Caco-2 (cell line): ENCODE measurements at regions of chr1 and their contacts with region 1.

Region 1: DNA sequence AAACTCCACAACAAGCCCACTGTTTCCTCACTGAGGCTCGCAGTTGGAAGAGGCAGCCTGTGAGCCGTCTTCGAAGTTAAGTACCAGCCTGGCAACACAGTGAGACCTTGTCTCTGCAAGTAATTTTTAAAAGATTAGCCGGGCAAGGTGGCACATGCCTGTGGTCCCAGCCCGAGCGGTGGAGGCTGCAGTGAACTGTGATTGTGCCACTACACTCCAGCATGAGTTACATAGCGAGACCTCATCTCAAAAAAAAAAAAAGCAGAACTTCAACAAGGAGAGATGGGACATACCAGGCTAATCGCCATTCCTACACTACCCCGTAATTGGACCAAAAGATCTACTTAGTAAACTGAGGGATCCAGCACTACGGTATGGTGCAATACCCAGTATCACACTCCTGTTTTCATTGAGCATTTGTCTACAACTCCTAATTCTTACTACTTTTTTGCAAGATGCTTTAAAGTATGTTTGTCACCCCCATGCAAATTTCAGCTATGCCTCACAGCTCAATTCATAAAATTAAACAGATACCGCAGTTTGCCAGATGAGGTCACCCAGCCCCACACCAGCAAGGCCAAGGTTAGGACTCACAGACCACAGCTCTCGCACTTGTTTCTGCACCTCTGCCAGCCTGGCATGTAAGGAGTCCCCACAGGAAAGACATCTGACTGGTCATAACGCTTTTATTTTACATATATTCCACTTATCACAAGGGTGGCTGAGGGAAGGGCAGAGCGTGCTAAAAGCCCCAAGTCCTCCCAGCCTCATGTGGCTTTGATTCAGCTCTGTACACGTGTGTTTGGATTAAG is 21.0 kb downstream of the SDE2 start:
- DNase-seq: no peak
- H3K4me3 ChIP-seq: no peak overlapping the region
- H3K4me3 Mint-ChIP-seq: no peak overlapping the region
- H3K27ac Mint-ChIP-seq: no peak overlapping the region
- H3K4me1 ChIP-seq: no peaks in the 10 kb centered on the region
- H3K4me1 Mint-ChIP-seq: no peaks in the 10 kb centered on the region
- H3K27me3 ChIP-seq: no peaks in the 10 kb centered on the region
- H3K27me3 Mint-ChIP-seq: no peaks in the 10 kb centered on the region
- CTCF ChIP-seq: no peak

Region 2: DNA sequence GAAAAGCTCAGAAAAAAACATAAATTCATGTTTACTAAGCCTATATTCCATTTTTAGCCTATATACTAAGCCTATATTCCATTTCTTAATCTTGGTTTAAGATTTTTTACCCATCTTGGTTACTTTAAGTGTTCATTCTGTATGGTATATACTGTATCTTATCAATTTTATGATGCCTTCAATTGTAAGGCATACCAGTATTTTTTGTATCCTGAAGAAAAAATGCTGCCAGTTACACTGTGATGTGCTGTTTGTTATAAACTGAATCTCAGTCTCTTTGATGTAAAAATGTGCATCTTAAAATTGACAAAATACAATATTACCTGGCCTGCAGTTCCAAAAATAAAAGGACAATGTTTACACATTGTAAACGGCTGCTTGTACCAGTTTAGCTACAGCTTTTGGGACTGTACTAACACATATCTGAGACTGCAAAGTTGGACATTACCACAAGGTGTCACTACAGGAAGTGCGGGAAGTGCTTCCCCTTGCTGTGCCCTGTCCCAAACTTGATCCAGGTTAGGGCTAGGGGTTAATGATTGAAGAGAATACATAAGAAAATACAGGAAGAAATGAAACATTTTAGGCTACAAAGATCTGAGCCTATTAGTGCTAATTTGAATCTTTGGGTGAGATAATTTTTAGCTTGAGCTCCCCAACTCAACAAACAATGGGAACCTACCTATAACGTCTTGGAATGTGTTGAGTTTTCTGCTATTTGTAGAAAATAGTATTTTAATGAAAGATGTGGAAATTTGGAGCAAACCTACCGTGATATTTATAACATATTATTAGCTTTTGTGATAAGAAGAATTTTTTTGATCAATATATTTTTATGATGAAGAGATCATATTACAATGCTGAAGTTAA is 659.2 kb before region 1 on chr1:
- CTCF ChIA-PET with region 1: no interaction called
- POLR2A ChIA-PET with region 1: no interaction called
- intact Hi-C with region 1: loop called (anchors 10 kb)
- DNase-seq: peak; percentile 58 to 71
- H3K4me3 ChIP-seq: no peak overlapping the region
- H3K4me3 Mint-ChIP-seq: no peak overlapping the region
- H3K27ac Mint-ChIP-seq: no peak overlapping the region
- H3K4me1 ChIP-seq: 0 out of 2 replicates have a peak, but pooled peaks cover 6% of the 10 kb centered on the region
- H3K4me1 Mint-ChIP-seq: peaks cover 10% of the 10 kb centered on the region
- H3K27me3 ChIP-seq: no peaks in the 10 kb centered on the region
- H3K27me3 Mint-ChIP-seq: no peaks in the 10 kb centered on the region
- CTCF ChIP-seq: peak; percentile 77 to 80

Region 3: GRCh38 chr1:225554216-225554812 is 423.8 kb before region 1 on chr1:
- CTCF ChIA-PET with region 1: no interaction called
- POLR2A ChIA-PET with region 1: no interaction called
- intact Hi-C with region 1: loop called (anchors 10 kb)
- DNase-seq: peak in 1 of 2 experiments; percentile 31
- H3K4me3 ChIP-seq: no peak overlapping the region
- H3K4me3 Mint-ChIP-seq: no peak overlapping the region
- H3K27ac Mint-ChIP-seq: no peak overlapping the region
- H3K4me1 ChIP-seq: no peaks in the 10 kb centered on the region
- H3K4me1 Mint-ChIP-seq: no peaks in the 10 kb centered on the region
- H3K27me3 ChIP-seq: no peaks in the 10 kb centered on the region
- H3K27me3 Mint-ChIP-seq: no peaks in the 10 kb centered on the region
- CTCF ChIP-seq: peak; percentile 50 to 56

Region 4: DNA sequence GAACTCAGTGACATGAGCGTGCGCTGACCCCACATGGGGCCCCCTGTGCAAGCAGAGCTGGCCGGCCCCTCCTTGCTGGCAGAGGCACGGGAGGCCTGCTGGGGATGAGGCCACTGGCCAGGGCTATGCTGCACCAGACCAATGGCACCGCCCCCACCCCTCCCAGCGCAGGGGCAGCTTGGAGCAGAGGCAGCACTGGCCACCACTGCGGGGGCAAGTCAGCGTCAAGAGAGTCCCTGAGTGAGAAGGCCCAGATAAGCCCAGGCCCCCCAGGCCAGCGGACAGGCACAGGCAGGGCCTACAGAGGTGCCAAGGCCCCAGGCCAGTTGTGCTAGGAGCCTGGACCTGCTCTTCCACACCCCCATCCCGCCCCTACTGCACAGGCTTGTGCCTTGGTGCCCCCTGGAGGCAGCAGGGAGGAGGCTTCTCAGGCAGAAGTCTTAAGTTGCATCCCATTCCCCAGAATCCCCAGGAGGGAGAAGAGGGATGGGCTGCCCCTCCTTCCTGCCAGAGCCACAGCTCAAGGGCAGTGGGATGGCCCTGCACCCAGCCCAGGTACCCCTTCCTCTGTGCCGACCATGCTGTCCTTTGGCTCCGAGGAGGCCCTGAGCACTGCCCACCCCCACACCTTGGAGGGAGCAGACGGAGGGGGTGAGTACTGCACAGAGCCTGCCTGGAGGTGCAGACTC is 132.4 kb before region 1 on chr1:
- CTCF ChIA-PET with region 1: no interaction called
- POLR2A ChIA-PET with region 1: no interaction called
- intact Hi-C with region 1: loop called (anchors 5 kb)
- DNase-seq: peak; percentile 85 to 87
- H3K4me3 ChIP-seq: no peak overlapping the region
- H3K4me3 Mint-ChIP-seq: no peak overlapping the region
- H3K27ac Mint-ChIP-seq: no peak overlapping the region
- H3K4me1 ChIP-seq: no peaks in the 10 kb centered on the region
- H3K4me1 Mint-ChIP-seq: no peaks in the 10 kb centered on the region
- H3K27me3 ChIP-seq: no peaks in the 10 kb centered on the region
- H3K27me3 Mint-ChIP-seq: no peaks in the 10 kb centered on the region
- CTCF ChIP-seq: peak; percentile 82

Region 5: DNA sequence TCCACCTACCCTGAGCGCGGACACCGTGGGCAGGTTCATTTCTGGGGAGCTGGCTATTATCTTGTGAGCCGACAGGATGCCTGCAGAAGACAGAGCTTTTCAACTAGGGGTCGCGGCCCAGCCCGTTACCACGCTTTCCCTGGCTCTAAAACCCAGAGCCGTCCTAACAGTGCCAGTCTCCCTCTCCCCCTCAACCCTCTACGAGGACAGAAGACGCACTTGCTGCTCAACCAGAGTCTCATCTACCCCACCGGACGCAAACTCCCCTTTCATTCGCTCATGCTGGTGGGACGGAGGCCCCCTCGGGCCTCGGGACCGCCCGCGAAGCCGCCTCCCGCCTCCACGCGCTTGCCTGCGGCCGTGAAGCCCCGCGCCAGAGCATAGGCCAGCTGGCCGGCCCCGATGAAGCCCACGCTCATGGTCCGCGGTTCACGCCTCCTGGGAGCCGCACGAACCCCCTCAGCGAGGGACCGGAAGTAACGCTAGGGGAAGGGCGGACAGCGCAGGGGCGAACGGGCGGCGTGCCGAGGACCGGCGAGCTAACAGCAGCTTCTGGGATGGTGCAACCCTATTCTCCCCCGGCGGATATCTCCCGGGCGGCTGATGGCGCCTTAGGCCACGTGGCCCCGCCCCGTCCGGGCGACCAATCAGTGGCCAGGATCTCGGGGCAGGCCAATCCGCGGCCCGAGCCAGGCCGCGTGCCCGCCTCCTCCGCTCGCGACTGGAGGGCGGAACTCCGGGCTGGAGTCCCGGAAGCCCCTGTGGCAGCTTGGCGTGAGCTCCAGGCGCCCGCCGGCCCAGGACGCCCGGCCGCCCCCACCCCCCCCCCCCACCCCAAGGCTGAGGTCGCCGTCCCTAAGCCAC is 54.2 kb before region 1 on chr1 and contains the start of gene PYCR2:
- CTCF ChIA-PET with region 1: no interaction called
- POLR2A ChIA-PET with region 1: interaction called, 5 read pairs
- intact Hi-C with region 1: loop called (anchors 5 kb)
- DNase-seq: peak; percentile 95 to 98
- H3K4me3 ChIP-seq: peak within 1 kb of the TSS; percentile 81
- H3K4me3 Mint-ChIP-seq: peak within 1 kb of the TSS; percentile 95
- H3K27ac Mint-ChIP-seq: peak within 1 kb of the TSS; percentile 94
- H3K4me1 ChIP-seq: no peaks in the 10 kb centered on the region
- H3K4me1 Mint-ChIP-seq: no peaks in the 10 kb centered on the region
- H3K27me3 ChIP-seq: no peaks in the 10 kb centered on the region
- H3K27me3 Mint-ChIP-seq: no peaks in the 10 kb centered on the region
- CTCF ChIP-seq: no peak
- total RNA-seq, gene PYCR2: 69.7 and 73.7 TPM in 2 replicates